ENCODE measurements at regions of chr1 and their contacts with region 1.

Region 1: DNA sequence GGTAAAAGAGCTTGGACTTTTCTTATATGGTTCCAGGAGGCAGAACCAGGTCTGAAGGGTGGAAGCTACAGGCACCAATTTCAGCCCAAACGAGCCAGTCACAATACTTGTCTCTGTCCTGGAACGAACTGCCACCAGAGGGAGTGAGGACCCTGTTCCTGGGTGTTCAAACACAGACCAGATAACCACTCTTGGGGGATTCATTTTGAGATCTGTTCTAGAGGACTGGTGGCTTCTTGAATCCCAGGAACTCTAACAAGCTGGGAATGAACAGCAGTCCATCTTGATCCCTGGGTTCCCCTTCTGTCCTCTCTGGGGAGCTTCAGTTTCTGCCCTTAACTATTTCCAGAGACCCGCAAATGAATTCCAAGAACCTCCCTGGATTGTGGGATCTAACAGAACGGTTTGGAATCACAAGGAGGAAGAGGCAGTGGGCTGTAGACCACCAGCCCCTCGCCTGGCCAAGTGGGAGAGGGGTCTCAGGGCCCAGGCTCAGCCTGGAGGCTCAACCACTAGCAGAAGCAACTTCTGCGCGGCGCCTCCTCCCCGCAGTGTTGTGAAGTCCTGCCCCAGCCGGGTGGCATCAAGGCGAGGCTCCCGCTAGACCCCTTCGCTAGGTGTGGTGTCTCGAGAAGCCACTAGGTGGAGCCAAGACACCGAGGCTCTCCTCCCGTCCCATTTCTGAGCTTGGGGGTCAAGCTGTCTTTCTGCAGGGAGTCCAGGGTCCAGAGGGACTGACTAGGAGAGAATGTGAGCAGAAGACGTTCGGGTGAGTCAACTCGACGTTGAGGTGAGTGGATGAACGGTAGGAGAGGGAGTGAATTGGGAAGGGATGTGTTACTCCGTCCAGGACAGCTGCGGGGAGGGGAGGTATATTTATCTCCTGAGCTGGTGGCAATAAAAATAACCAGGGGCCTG is 12.1 kb upstream of the NES start:
- DNase-seq: peak; percentile 82
- H3K4me3 ChIP-seq: no peak overlapping the region
- H3K27ac ChIP-seq: peak overlapping the region in 1 of 3 donors; percentile 15
- H3K4me1 ChIP-seq: peaks cover 35 to 51% of the 10 kb centered on the region in 2 donors
- H3K27me3 ChIP-seq: no peaks in the 10 kb centered on the region
- CTCF ChIP-seq: peak; percentile 91 to 95 (median 95)
- POLR2A ChIP-seq: no peak

Region 2: GRCh38 chr1:156725683-156726280 is 36.5 kb after region 1 on chr1:
- intact Hi-C with region 1: loop called (anchors 2 kb)
- DNase-seq: peak; percentile 90 to 91
- H3K4me3 ChIP-seq: no peak overlapping the region
- H3K27ac ChIP-seq: no peak overlapping the region
- H3K4me1 ChIP-seq: peaks cover 32 to 37% of the 10 kb centered on the region in 2 donors
- H3K27me3 ChIP-seq: no peaks in the 10 kb centered on the region
- CTCF ChIP-seq: peak; percentile 80 to 95 (median 93)
- POLR2A ChIP-seq: no peak

Region 3: DNA sequence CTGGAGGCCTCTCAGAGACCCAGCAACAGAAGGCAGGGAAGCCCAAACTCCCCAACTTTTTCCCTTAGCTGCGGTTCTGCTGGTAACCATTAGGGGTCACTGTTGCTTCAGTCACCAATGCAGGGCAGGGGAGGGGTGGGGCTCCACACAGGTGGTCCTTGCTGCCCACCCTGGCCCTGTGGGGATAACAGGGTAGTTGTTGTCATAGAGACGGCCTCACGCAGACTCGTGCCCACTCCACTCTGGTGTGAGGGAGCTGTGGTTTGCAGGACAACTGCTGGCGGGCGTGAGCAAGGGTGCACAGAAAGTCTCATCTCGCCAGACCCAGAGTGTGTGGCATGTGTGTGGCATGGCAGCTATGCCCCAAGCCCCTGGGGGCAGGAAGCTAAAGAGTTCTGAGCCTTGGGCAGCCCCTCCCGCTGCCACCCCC is 149.7 kb after region 1 on chr1:
- intact Hi-C with region 1: no loop called
- DNase-seq: no peak
- H3K4me3 ChIP-seq: no peak overlapping the region
- H3K27ac ChIP-seq: no peak overlapping the region
- H3K4me1 ChIP-seq: no peaks in the 10 kb centered on the region
- H3K27me3 ChIP-seq: no peaks in the 10 kb centered on the region
- CTCF ChIP-seq: peak; percentile 61 to 95 (median 70)
- POLR2A ChIP-seq: no peak

Region 4: GRCh38 chr1:156889802-156890585 is 200.7 kb after region 1 on chr1:
- intact Hi-C with region 1: loop called (anchors 10 kb)
- DNase-seq: peak; percentile 82 to 85
- H3K4me3 ChIP-seq: no peak overlapping the region
- H3K27ac ChIP-seq: no peak overlapping the region
- H3K4me1 ChIP-seq: peaks cover 5 to 14% of the 10 kb centered on the region in 2 donors
- H3K27me3 ChIP-seq: peaks cover 3% of the 10 kb centered on the region
- CTCF ChIP-seq: peak; percentile 24 to 84 (median 68)
- POLR2A ChIP-seq: no peak